ENCODE measurements at regions of chr19 and their contacts with region 1.

Region 1: DNA sequence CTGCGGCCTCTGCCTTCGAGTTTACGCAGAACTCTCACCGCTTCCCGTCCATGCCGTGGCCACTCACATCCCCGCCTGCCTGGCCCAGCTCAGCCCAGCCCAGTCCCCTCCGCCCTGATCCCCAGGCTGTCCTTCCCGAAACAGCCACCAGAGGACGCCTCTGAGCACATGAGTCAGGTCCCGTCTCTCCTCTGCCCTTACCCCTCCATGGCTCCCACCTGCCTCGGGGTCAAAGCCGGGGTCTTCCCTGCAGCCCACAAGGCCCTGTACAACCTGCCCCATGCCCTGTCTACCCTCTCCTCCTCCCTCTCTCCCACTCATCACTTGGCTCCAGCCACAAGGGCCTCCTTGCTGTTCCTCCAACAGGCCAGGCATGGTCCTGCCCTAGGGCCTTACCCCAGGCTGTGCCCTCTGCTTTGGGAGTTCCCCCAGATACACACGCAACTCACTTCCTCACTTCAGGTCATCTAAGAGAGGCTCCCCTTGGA is 8.1 kb upstream of the SEMA6B start:
- DNase-seq: peak; percentile 79

Region 2: DNA sequence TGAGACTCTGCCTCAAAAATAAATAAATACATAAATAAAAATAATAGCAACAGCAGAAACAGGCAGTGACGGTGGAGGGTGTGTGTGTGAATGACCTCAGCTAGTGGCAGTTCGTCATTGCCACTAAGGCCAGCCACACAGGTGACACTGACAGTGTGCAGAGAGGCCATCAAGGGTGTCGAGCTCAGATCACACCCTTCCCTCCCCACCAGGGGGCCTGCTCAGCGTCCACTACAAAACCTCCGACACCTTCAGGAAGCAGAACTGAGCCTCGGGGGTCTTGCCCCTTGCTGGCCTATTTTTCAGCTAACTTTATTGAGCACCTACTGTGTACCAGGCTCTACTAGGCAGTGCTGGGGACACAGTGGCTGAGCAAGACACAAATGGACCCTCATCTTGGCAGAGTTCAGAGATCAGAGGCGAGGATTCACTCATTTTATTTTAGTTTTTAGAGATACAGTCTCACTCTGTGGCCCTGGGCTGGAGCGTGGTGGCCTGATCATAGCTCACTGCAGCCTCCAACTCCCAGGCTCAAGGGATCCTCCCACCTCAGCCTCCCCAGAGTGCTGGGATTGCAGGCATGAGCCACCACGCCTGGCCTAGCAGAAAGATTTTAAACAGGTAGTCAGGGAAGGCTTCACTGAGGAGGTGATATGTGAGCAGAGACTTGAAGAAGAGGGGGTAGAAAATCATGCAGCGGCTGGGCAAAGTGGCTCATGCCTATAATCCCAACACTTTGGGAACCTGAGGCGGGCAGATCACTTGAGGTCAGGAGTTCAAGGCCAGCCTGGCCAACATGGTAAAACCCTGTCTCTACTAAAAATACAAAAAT is 22.2 kb after region 1 on chr19:
- CTCF ChIA-PET with region 1: no interaction called
- POLR2A ChIA-PET with region 1: no interaction called
- DNase-seq: no peak

Region 3: DNA sequence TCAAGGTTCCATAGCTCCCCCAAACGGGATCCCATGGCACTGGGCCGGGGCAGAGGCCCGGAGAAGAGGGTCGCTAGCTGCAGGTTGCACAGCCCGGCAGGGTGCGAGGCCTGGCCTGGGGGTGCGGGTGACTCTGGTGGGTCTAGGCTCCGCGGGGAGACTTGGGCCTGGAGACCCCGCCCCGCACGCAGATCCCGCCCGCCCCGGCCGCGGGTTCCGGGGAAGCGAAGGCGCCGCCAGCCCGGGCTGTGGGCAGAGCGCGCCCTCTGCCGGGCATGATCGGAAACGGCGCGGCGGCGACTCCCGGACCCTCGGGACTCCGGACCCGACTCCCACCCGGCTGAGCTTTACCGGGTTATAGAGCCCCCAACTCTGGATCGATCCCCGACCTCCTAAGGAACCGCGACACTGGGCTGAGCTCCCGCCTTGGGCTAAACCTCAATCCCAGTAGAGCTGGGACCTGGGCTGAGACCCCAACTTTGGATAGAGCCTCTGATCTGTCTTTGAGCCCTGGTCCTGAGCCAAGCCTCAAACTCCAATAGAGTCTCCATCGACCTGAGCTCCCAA is 68.6 kb after region 1 on chr19:
- CTCF ChIA-PET with region 1: interaction called, 21 read pairs
- POLR2A ChIA-PET with region 1: interaction called, 3 read pairs
- DNase-seq: peak; percentile 77